Activated naive CD8-positive, alpha-beta T cell treated with anti-CD3 and anti-CD28 coated beads, Interleukin-2, amount 10 ng/mL, durations not matched to agents 7 days and 5 days (primary cell): ENCODE measurements at regions of chr16 and their contacts with region 1.

Region 1: GRCh38 chr16:85554112-85554813 is 58.9 kb upstream of the GSE1 start:
- DNase-seq: peak; percentile 59
- ATAC-seq: peak; percentile 57
- H3K4me3 Mint-ChIP-seq: peak overlapping the region; percentile 87
- H3K27ac Mint-ChIP-seq: peak overlapping the region; percentile 92
- H3K4me1 Mint-ChIP-seq: peaks cover 32% of the 10 kb centered on the region
- H3K27me3 Mint-ChIP-seq: no peaks in the 10 kb centered on the region

Region 2: DNA sequence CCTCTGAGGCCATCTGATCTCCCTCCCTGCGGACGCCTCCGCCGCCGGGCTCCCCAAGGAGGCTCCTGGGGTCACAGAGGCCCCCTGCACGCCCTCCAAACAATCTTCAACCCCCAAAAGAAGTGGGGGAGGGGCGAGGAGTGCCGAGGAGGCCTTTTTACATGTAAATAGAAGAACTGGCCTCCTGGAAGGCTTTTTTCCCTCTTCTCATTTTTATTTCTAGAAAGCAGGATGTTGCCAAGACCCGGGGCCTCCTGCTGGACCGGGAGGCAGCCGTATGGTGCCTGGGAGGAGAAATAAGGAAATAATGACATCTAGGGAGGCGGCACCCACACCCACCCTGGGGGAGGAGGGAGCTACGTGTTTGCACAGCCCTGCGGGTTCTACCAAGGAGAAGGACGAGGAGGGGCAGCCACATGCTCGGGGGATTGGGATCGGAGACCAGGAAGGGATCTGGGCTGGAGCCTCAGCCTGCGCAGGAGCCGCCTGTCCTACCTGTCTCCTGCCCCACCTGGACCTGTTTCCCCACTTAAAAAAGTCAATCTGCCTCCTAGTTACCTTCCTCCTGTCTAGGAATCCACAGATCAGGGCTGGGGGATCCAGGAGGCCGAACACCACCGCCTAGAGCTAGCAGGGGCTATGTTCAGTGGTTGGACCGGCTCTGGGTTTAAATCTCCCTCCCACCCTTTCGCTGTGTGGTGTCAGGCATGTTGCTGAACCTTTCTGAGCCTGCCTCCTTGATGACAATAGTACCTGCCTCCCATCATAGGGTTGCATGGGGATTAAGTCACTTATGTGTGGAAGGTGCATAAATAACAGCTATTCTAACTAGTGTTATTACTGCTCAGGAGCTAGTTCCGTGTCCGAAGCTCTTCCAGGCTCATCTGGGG is 116.9 kb before region 1 on chr16:
- POLR2A ChIA-PET with region 1: no interaction called
- DNase-seq: no peak
- ATAC-seq: no peak
- H3K4me3 Mint-ChIP-seq: no peak overlapping the region
- H3K27ac Mint-ChIP-seq: no peak overlapping the region
- H3K4me1 Mint-ChIP-seq: no peaks in the 10 kb centered on the region
- H3K27me3 Mint-ChIP-seq: peaks cover 2% of the 10 kb centered on the region

Region 3: DNA sequence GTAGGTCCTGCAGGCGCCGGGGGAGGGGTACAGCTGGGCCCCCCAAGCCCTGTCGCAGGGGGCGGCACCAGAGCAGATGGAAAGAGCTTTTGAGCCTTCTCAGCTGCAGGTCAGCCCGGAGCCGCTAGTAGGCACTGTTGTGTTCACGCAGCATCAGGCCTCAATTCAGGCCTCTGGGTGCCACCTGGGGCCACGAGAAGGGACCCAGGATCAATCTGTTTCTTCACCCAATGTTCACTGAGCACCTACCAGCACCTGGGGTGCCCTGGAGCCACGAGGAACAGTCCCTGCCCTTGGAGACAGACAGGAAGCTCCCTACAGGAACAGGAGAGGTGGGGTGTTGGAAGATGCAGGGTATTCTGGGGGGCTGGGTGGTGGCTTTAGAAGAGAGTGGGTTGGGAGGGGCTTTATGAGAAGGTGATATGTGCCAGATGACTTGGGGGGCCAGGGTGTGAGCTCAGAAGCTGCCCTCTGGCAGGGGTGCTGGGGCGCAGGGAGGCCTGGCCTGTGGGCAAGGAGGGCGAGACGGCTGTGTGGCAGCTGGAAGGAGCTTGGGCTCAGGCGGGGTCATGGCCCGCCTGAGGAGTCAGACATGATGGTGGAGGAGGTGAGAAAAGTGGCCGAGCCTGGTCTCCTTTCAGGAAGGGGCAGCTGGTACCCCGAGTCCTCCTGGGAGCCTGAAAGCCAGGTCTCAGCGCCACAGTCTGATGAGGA is 63.0 kb before region 1 on chr16:
- POLR2A ChIA-PET with region 1: interaction called, 15 read pairs
- DNase-seq: peak; percentile 59
- ATAC-seq: no peak
- H3K4me3 Mint-ChIP-seq: no peak overlapping the region
- H3K27ac Mint-ChIP-seq: no peak overlapping the region
- H3K4me1 Mint-ChIP-seq: peaks cover 11% of the 10 kb centered on the region
- H3K27me3 Mint-ChIP-seq: peaks cover 3% of the 10 kb centered on the region

Region 4: GRCh38 chr16:85569615-85570212 is 15.5 kb after region 1 on chr16:
- POLR2A ChIA-PET with region 1: interaction called, 81 read pairs
- DNase-seq: peak; percentile 68
- ATAC-seq: peak; percentile 68
- H3K4me3 Mint-ChIP-seq: peak overlapping the region; percentile 86
- H3K27ac Mint-ChIP-seq: peak overlapping the region; percentile 97
- H3K4me1 Mint-ChIP-seq: peaks cover 56% of the 10 kb centered on the region
- H3K27me3 Mint-ChIP-seq: no peaks in the 10 kb centered on the region

Region 5: DNA sequence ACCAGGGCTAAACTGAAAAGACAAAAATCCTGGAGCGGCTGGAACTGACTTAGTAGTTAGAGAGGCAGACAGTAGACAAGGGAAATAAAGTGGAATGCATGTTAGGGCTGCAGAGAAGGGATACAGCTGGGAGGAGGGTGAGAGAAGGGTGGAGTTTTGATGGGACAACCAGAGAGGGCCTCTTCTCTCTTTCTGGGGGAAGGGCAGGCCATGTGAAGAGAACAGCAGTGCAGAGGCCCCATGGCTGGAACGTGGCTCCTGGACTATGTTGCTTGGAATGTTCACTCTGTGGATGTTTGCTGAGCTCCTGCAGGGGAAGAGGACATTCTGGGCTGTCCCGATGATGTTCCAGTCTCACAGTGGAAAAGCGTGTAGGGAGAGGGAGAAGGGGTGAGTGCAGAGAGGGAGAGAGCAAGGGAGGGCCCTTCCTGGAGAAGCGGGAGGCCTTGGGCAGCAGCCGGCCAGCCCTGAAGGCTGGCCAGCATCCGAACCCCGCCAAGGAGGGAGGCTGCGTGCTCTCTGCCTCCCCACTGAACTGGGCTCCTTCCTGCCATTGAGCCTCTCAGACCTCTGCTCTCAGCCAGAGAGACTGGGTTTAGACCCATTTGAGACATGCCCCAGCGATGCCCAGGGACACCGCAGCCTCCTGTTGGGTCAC is 25.8 kb after region 1 on chr16:
- POLR2A ChIA-PET with region 1: interaction called, 10 read pairs
- DNase-seq: no peak
- ATAC-seq: no peak
- H3K4me3 Mint-ChIP-seq: no peak overlapping the region
- H3K27ac Mint-ChIP-seq: peak overlapping the region; percentile 17
- H3K4me1 Mint-ChIP-seq: peaks cover 10% of the 10 kb centered on the region
- H3K27me3 Mint-ChIP-seq: no peaks in the 10 kb centered on the region

Region 6: DNA sequence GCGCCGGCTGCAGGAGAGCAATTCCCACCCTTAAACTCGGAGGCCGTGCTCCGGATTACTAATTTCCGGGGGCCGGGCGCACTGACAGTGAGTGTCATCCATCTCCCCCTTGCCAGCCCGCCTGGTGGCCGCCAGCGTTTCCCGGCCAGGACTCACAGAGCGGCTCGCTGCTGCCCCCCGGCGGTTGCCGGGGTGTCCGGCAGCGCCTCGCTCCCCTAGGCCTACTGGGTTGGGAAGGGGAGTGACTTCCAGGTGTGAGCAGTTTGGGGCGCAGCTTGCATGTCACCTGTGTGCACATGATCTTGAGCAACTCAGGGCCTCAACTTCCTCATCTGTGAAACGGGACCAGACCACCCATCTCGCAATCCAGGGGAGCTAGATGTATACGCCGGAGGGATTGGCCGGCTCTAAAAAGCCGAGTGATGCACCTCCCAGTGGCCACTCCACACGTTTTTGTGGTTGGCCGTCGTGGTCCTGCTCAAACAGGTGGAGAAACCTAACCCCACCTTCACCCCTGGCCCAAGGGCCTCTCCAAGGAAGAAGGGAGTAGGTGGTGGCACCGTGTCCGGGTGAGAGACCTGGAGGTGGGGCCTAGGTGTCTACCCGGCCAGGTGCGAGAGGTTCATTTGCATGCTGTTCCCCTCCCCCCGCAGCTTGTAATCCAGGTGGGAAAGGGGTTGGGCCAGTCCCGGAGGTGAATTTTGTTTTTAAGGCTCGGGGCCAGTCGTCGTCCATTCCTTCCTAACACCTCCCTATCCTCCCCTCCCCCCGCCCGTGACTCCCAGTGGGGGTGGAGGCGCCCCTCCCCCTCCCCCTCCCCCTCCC is 56.5 kb after region 1 on chr16:
- POLR2A ChIA-PET with region 1: interaction called, 175 read pairs
- DNase-seq: peak; percentile 98
- ATAC-seq: peak; percentile 64
- H3K4me3 Mint-ChIP-seq: peak overlapping the region; percentile 75
- H3K27ac Mint-ChIP-seq: peak overlapping the region; percentile 69
- H3K4me1 Mint-ChIP-seq: peaks cover 39% of the 10 kb centered on the region
- H3K27me3 Mint-ChIP-seq: peaks cover 2% of the 10 kb centered on the region

Region 7: GRCh38 chr16:85728879-85729278 is 174.6 kb after region 1 on chr16:
- POLR2A ChIA-PET with region 1: no interaction called
- DNase-seq: no peak
- ATAC-seq: no peak
- H3K4me3 Mint-ChIP-seq: no peak overlapping the region
- H3K27ac Mint-ChIP-seq: no peak overlapping the region
- H3K4me1 Mint-ChIP-seq: no peaks in the 10 kb centered on the region
- H3K27me3 Mint-ChIP-seq: no peaks in the 10 kb centered on the region